Activated CD4-positive, alpha-beta memory T cell treated with anti-CD3 and anti-CD28 coated beads for 36 hours (primary cell): ENCODE measurements at regions of chr17 and their contacts with region 1.

Region 1: GRCh38 chr17:44186307-44187130 is at the start of gene TMUB2:
- DNase-seq: peak; percentile 100
- H3K4me3 Mint-ChIP-seq: peak within 1 kb of the TSS; percentile 94
- H3K27ac Mint-ChIP-seq: peak within 1 kb of the TSS; percentile 97
- H3K4me1 Mint-ChIP-seq: peaks cover 43% of the 10 kb centered on the region
- H3K27me3 Mint-ChIP-seq: no peaks in the 10 kb centered on the region
- total RNA-seq, gene TMUB2: 21.8 to 21.9 TPM

Region 2: DNA sequence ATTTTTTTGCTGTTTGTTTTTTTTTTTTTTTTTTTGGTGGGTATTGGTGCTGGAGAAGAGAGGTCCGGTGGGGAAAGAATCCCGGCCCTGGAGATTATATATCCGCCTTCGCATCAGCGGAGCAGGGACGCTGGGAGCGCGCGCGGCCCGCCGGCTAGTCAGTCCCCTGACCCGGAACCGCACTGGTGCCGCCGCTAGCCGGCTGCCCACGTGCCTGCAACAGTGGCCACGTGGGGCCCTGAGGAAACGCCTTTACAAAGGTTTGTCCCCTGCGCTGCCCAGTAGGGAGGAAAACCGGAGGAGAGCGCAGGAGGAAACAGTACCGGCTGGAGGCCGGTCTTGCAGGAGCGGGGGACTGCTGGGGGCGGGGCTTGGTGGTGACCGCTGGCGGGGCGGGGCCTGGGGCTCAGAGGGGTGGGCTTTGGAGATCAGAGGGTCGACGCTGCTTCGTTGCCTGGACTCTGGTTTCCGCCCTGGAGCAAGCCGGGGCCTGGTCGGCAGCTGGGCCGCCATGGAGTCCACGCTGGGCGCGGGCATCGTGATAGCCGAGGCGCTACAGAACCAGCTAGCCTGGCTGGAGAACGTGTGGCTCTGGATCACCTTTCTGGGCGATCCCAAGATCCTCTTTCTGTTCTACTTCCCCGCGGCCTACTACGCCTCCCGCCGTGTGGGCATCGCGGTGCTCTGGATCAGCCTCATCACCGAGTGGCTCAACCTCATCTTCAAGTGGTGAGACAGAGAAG is 115.9 kb before region 1 on chr17 and contains the start of gene G6PC3:
- CTCF ChIA-PET with region 1: no interaction called
- POLR2A ChIA-PET with region 1: interaction called, 9 read pairs
- intact Hi-C with region 1: loop called (anchors 1 kb)
- DNase-seq: peak; percentile 95
- H3K4me3 Mint-ChIP-seq: peak within 1 kb of the TSS; percentile 97
- H3K27ac Mint-ChIP-seq: peak within 1 kb of the TSS; percentile 95
- H3K4me1 Mint-ChIP-seq: peaks cover 30% of the 10 kb centered on the region
- H3K27me3 Mint-ChIP-seq: no peaks in the 10 kb centered on the region
- total RNA-seq, gene G6PC3: 20.7 to 21.9 TPM

Region 3: DNA sequence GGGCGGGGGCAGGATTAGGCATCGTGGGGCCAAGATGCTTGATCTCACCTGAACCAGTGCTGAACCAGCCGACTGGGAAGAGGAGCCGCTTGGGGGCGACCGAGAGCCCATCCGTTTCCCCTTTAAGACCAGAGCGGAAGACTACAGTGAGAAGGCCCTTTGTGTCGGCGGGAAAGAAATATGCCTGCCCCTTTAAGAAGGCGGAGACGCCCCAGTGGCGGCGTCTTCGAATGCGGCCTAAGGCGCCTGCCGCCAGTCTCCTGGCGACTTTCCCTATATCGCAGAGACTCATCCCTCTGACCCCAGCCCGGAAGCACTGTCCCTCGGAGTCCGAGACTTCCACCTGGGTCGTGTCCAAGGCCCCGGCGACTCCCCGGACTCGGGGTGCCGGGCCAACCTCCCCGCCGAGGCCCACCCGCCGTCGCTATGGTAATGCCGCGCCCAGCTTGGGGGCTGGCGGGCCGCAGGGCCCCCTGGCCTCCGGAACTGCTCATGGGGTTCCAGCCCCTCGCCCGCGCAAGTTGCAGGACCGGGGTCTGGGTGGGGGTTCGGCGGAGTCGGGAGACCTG is 44.7 kb before region 1 on chr17 and contains the start of gene HROB:
- CTCF ChIA-PET with region 1: interaction called, 3 read pairs
- POLR2A ChIA-PET with region 1: no interaction called
- intact Hi-C with region 1: loop called (anchors 1 kb)
- DNase-seq: peak; percentile 99
- H3K4me3 Mint-ChIP-seq: peak within 1 kb of the TSS; percentile 87
- H3K27ac Mint-ChIP-seq: peak within 1 kb of the TSS; percentile 89
- H3K4me1 Mint-ChIP-seq: peaks cover 24% of the 10 kb centered on the region
- H3K27me3 Mint-ChIP-seq: peaks cover 4% of the 10 kb centered on the region
- total RNA-seq, gene HROB: 17.9 to 19.8 TPM

Region 4: GRCh38 chr17:44155488-44155887 is 31.0 kb before region 1 on chr17:
- CTCF ChIA-PET with region 1: no interaction called
- POLR2A ChIA-PET with region 1: no interaction called
- intact Hi-C with region 1: no loop called
- DNase-seq: no peak
- H3K4me3 Mint-ChIP-seq: no peak overlapping the region
- H3K27ac Mint-ChIP-seq: no peak overlapping the region
- H3K4me1 Mint-ChIP-seq: peaks cover 6% of the 10 kb centered on the region
- H3K27me3 Mint-ChIP-seq: no peaks in the 10 kb centered on the region

Region 5: DNA sequence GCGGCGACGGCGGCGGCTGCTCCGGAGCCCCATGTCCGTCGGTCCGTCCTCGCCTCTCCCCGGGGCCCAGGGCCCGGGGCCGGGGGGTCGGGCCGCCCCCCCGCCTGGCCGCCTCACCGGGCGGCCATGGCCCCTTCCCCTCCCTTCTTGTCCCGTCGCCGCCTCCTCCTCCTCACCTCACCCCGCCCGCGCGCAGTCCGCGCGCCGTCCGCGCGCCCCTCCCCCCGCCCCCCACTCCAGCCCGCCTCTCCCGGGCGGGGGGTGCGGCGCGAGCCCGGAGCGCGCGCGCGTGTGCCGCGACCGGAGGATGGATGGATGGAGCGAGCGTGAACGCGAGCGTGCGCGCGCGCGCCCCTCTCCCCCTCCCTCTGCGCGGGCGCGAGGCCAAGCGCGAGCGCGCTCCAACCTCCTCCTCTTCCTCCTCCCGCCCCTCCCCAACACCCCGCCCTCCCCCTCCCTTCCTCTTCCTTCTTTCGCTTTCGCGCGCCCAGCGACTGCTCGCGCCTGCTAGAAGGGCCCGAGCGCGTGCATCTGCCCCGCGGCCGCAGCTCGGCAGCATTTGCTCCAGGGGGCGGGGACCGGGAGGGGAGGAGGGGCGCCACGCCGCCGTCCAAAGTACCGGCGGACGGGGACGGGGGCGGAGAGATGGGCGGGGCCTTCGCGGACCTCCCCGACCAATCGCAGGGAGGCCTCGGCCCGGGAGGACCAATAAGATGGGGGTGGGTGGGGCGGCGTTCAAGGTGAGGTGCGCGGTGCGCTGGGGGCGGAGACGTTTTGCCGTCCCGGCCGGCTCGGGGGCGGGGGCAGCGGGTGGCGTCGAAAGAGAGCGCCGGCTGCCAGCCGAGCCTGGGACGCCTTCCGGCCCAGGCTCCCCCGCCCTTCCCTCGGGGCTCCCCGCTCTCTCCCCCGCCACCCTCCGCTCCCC is 13.3 kb after region 1 on chr17 and contains the start of gene ATXN7L3:
- CTCF ChIA-PET with region 1: interaction called, 8 read pairs
- POLR2A ChIA-PET with region 1: interaction called, 22 read pairs
- intact Hi-C with region 1: loop called (anchors 1 kb)
- DNase-seq: peak; percentile 100
- H3K4me3 Mint-ChIP-seq: peak within 1 kb of the TSS; percentile 91
- H3K27ac Mint-ChIP-seq: peak within 1 kb of the TSS; percentile 92
- H3K4me1 Mint-ChIP-seq: peaks cover 41% of the 10 kb centered on the region
- H3K27me3 Mint-ChIP-seq: no peaks in the 10 kb centered on the region
- total RNA-seq, gene ATXN7L3: 63.4 to 69.7 TPM

Region 6: GRCh38 chr17:44218344-44219107 is 32.0 kb after region 1 on chr17:
- CTCF ChIA-PET with region 1: interaction called, 10 read pairs
- POLR2A ChIA-PET with region 1: interaction called, 7 read pairs
- intact Hi-C with region 1: loop called (anchors 1 kb)
- DNase-seq: peak; percentile 91
- H3K4me3 Mint-ChIP-seq: peak overlapping the region; percentile 98
- H3K27ac Mint-ChIP-seq: peak overlapping the region; percentile 94
- H3K4me1 Mint-ChIP-seq: peaks cover 40% of the 10 kb centered on the region
- H3K27me3 Mint-ChIP-seq: no peaks in the 10 kb centered on the region

Region 7: GRCh38 chr17:44258811-44259351 is 72.4 kb after region 1 on chr17:
- CTCF ChIA-PET with region 1: no interaction called
- POLR2A ChIA-PET with region 1: no interaction called
- intact Hi-C with region 1: no loop called
- DNase-seq: no peak
- H3K4me3 Mint-ChIP-seq: no peak overlapping the region
- H3K27ac Mint-ChIP-seq: no peak overlapping the region
- H3K4me1 Mint-ChIP-seq: no peaks in the 10 kb centered on the region
- H3K27me3 Mint-ChIP-seq: peaks cover 2% of the 10 kb centered on the region